ENCODE measurements at regions of chr1 and their contacts with region 1.

Region 1: GRCh38 chr1:109112652-109113285 is 1.1 kb upstream of the ELAPOR1 start:
- DNase-seq: peak; percentile 82 to 92 (median 89)
- H3K4me3 ChIP-seq: peak overlapping the region in 1 of 3 experiments; percentile 69
- H3K4me3 Mint-ChIP-seq: peak overlapping the region; percentile 77 to 92
- H3K27ac ChIP-seq: peak overlapping the region in 1 of 2 donors; percentile 24
- H3K27ac Mint-ChIP-seq: peak overlapping the region in 6 of 7 donors; percentile 30 to 88 (median 74)
- H3K4me1 ChIP-seq: peaks cover 33 to 35% of the 10 kb centered on the region in 2 donors
- H3K4me1 Mint-ChIP-seq: peaks cover 40% of the 10 kb centered on the region
- H3K27me3 ChIP-seq: peaks cover 32 to 35% of the 10 kb centered on the region in 2 donors
- H3K27me3 Mint-ChIP-seq: peaks cover 35 to 51% (median 49%) of the 10 kb centered on the region in 3 donors
- CTCF ChIP-seq: peak; percentile 98

Region 2: DNA sequence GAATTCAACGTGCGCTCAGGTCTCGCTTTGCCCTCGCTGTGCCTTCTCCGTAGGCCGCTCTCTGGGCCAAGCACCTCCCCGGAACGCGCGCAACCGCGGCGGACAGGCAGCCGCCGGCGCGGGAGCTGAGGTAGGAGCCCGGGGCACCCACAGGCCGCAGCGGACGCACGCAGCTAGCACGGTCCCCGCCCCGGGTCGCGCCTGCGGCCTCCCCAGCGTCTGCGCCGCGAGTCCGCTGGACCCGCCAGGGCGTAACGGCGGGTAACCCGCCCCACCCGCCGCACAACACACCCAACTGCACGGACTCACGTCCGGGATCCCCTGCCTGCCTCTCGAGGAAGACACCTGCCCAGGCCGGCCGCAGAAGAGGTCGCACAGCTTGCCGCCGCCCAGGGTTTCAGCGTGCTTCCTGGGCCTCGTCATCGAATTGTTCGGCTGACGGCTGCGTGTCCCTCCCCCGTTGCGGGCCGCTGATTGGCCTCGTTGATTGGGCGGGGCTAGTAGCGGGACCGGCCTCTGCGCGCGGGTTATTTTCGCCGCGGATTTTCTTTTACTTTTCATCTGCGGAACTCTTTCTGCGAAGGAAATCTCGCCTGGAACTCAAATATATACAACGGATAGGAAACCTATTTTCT is 149.6 kb before region 1 on chr1 and contains the start of gene CLCC1:
- intact Hi-C with region 1: loop called (anchors 10 kb)
- DNase-seq: peak; percentile 84
- H3K4me3 ChIP-seq: peak within 1 kb of the TSS; percentile 52 to 80 (median 73)
- H3K4me3 Mint-ChIP-seq: peak within 1 kb of the TSS; percentile 87 to 90
- H3K27ac ChIP-seq: peak within 1 kb of the TSS; percentile 83 to 88
- H3K27ac Mint-ChIP-seq: peak within 1 kb of the TSS; percentile 90 to 97 (median 96)
- H3K4me1 ChIP-seq: peaks cover 16 to 21% of the 10 kb centered on the region in 2 donors
- H3K4me1 Mint-ChIP-seq: peaks cover 20% of the 10 kb centered on the region
- H3K27me3 ChIP-seq: no peaks in the 10 kb centered on the region
- H3K27me3 Mint-ChIP-seq: peaks cover 0 to 2% (median 0%) of the 10 kb centered on the region in 3 donors
- CTCF ChIP-seq: no peak
- polyA plus RNA-seq, gene CLCC1: 7.1 to 12.9 (median 9.4) TPM

Region 3: GRCh38 chr1:109041621-109042468 is 70.9 kb before region 1 on chr1 and contains the start of gene WDR47:
- intact Hi-C with region 1: loop called (anchors 5 kb)
- DNase-seq: peak; percentile 94 to 95 (median 95)
- H3K4me3 ChIP-seq: peak within 1 kb of the TSS; percentile 74 to 97 (median 88)
- H3K4me3 Mint-ChIP-seq: peak within 1 kb of the TSS; percentile 86 to 93
- H3K27ac ChIP-seq: peak within 1 kb of the TSS; percentile 60 to 88
- H3K27ac Mint-ChIP-seq: peak within 1 kb of the TSS; percentile 77 to 92 (median 85)
- H3K4me1 ChIP-seq: peaks cover 13 to 17% of the 10 kb centered on the region in 2 donors
- H3K4me1 Mint-ChIP-seq: peaks cover 14% of the 10 kb centered on the region
- H3K27me3 ChIP-seq: no peaks in the 10 kb centered on the region
- H3K27me3 Mint-ChIP-seq: peaks cover 7 to 12% (median 9%) of the 10 kb centered on the region in 3 donors
- CTCF ChIP-seq: no peak
- polyA plus RNA-seq, gene WDR47: 5.2 to 7.6 (median 6.0) TPM

Region 4: DNA sequence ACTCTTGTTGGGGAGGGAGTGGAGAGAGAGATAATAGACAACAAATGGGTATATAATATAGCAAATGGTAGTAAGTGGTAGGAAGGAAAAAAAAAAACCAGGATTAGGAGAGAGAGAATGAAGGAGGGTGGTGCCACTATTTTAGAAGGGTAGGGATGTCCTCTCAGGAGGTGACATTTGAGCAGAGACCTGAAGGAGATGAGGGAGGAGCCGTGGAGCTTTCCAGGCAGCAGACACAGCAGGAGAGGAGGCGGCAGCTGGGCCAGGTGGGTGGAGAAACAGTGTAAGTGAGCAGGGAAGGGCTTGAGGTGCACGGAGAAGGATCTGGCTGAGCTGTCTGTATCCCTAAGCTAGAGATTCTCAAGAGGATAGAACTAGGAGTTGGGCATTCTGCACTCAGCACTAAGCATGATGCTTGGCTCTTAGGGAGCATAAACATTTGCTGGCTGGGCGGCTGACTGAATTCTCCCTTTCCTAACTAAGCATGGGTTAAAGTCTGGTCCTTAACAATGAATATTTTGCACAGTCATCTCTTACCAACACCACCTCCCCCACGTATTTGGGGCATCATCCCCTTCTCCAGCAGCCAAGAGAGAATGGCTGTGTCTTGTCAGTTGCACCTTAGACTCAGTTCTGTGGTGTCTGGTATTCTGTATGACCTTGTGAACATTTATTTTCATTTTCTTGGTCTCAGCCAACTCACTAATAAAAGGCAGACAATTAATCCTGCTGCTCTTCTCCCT is 73.4 kb after region 1 on chr1:
- intact Hi-C with region 1: loop called in 1 of 2 experiments (anchors 2 kb)
- DNase-seq: no peak
- H3K4me3 ChIP-seq: no peak overlapping the region
- H3K4me3 Mint-ChIP-seq: no peak overlapping the region
- H3K27ac ChIP-seq: peak overlapping the region in 1 of 2 donors; percentile 76
- H3K27ac Mint-ChIP-seq: peak overlapping the region in 5 of 7 donors; percentile 70 to 94 (median 92)
- H3K4me1 ChIP-seq: peaks cover 34 to 52% of the 10 kb centered on the region in 2 donors
- H3K4me1 Mint-ChIP-seq: peaks cover 54% of the 10 kb centered on the region
- H3K27me3 ChIP-seq: no peaks in the 10 kb centered on the region
- H3K27me3 Mint-ChIP-seq: peaks cover 7 to 20% (median 12%) of the 10 kb centered on the region in 3 donors
- CTCF ChIP-seq: no peak

Measured in CD14-positive monocyte (primary cell).